ENCODE measurements at regions of chr9 and their contacts with region 1.

Region 1: DNA sequence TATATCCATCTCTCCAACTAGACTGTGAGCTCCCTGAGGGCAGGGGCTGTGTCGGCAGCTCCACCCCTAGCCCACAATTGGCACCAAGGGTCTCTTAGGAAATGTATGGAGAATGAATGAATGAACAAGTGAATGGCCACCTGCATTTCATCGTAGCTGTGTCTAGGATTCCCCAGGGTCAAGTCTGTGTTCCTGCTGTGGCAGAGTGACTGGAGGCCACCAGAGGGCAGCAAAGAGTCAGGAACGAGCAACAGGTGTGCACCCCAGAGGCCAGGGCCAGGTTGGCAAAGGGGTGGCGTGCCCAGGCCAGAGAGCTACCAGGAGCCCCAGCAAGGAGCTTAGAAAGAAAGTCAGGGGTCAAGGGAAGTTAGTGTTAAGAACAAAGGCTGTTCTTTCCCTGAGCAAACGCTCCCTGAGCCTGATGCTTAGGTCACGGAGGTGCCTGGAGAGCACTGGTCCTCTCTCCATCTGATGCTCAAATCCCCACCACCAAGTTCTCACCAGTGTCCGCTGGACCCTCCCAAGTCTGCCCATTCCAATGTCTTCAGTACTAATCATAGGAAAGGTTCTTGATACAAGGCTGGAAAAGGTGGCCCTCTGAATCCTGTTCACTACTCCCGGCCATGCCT is 160.7 kb downstream of the PAX5 start:
- DNase-seq: peak; percentile 53 to 76 (median 75)
- ATAC-seq: peak; percentile 66 to 78
- H3K4me3 ChIP-seq: no peak overlapping the region
- H3K27ac ChIP-seq: no peak overlapping the region
- H3K4me1 ChIP-seq: no peaks in the 10 kb centered on the region
- H3K27me3 ChIP-seq: no peaks in the 10 kb centered on the region

Region 2: GRCh38 chr9:36974731-36975130 is 101.4 kb after region 1 on chr9:
- intact Hi-C with region 1: no loop called
- DNase-seq: no peak
- ATAC-seq: no peak
- H3K4me3 ChIP-seq: no peak overlapping the region
- H3K27ac ChIP-seq: no peak overlapping the region
- H3K4me1 ChIP-seq: no peaks in the 10 kb centered on the region
- H3K27me3 ChIP-seq: peaks cover 3% of the 10 kb centered on the region

Region 3: DNA sequence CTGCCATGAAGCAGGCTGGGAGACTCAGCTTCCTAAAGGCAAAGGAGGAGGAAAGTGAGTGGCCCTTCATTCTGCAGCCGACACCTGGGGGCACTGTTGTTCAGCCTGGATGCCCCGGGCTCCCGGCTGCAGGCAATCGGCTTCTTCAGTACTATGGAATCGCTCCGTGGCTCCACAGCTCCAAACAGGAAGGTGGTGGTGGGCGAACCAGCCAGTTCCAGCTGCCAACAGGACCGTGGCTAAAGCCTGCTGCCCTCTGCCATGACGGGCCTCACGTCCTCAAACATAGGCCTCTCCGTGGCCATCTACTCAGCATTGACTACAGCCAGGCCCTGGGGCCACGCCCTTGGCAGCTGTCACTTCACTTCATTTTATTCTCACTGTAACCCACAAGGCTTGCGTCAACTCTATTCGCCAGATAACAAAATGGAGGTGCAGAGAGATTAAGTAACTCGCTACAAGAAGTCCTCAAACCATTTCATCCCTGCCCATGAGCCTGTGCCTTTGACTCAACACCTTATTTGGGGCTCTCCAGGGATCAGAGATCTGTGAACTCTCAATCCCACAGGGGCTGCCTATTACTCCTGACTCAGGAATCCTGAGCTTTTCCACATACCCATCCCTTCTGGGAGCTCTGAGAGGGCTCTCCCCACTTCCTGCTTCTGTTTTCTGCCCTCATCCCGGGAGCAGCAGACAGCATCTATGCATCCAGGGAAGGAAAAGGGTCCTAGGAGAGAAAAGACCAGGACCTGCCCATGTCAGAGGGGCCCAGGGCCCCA is 122.8 kb after region 1 on chr9:
- intact Hi-C with region 1: no loop called
- DNase-seq: peak; percentile 44 to 67 (median 61)
- ATAC-seq: peak; percentile 65 to 76
- H3K4me3 ChIP-seq: no peak overlapping the region
- H3K27ac ChIP-seq: no peak overlapping the region
- H3K4me1 ChIP-seq: no peaks in the 10 kb centered on the region
- H3K27me3 ChIP-seq: no peaks in the 10 kb centered on the region

Region 4: GRCh38 chr9:37262410-37262809 is 389.0 kb after region 1 on chr9:
- intact Hi-C with region 1: loop called in 1 of 4 experiments (anchors 10 kb)
- DNase-seq: no peak
- ATAC-seq: no peak
- H3K4me3 ChIP-seq: no peak overlapping the region
- H3K27ac ChIP-seq: no peak overlapping the region
- H3K4me1 ChIP-seq: no peaks in the 10 kb centered on the region
- H3K27me3 ChIP-seq: no peaks in the 10 kb centered on the region

Measured in right cardiac atrium (tissue), 5 donors.